ENCODE measurements at regions of chr17 and their contacts with region 1.

Region 1: GRCh38 chr17:9802305-9803096 is 11.1 kb upstream of the DHRS7C start:
- DNase-seq: peak; percentile 92 to 96
- H3K4me3 ChIP-seq: peak overlapping the region; percentile 46; the same call in 1 of the 2 replicates
- H3K27ac ChIP-seq: peak overlapping the region; percentile 97
- H3K4me1 ChIP-seq: peaks cover 24% of the 10 kb centered on the region
- H3K27me3 ChIP-seq: no peaks in the 10 kb centered on the region
- CTCF ChIP-seq: no peak

Region 2: DNA sequence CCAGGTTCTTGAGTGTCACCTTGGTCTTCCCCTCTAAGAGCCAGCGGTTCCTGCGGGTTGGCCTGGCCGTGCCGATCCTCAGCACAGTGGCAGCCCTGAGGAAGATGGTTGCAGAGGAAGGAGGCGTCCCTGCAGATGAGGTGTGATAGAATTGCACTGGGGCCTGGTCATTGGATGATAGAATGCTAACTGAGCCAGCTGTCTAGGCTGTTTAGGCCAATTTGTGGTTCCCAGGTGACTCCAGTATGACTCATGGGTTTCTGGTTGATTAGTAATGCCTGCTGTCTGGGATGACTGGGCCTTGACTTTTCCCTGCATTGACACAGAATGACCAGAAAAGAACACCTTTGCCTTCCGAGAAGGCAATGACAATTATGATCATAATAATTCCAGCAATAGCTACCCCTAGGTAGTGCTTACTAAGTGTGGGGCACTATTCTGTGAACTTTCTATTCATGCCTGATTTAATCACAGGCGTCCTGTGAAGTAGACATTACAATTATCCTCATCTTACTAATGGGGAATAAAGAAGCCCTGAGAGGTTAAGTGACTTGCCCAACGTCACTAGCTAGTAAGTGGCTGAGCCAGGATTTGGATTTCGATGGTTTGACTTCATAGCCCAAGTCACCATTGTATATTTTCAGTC is 125.6 kb before region 1 on chr17:
- CTCF ChIA-PET with region 1: no interaction called
- POLR2A ChIA-PET with region 1: no interaction called
- intact Hi-C with region 1: loop called (anchors 1 kb)
- DNase-seq: peak; percentile 83 to 91
- H3K4me3 ChIP-seq: no peak overlapping the region
- H3K27ac ChIP-seq: peak overlapping the region; percentile 83
- H3K4me1 ChIP-seq: peaks cover 25% of the 10 kb centered on the region
- H3K27me3 ChIP-seq: no peaks in the 10 kb centered on the region
- CTCF ChIP-seq: no peak

Region 3: DNA sequence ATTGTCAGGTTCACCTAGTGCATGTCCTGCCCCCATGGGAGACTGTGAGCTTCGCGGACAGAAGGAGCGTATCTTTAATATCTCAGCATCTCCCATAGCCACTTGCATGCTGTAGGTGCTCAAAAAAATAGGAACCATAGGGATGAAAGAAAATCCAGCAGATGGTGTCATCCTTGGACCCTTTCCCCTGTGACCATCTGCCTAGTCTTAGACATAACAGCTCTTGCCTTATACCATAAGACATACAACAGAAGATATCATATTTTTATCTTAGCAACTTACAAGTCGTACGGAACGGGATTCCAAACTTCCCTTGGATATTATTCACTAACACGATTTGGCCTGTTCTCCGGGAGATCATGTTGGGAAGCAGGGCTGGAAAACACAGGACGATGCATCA is 25.6 kb before region 1 on chr17:
- CTCF ChIA-PET with region 1: no interaction called
- POLR2A ChIA-PET with region 1: no interaction called
- intact Hi-C with region 1: no loop called
- DNase-seq: no peak
- H3K4me3 ChIP-seq: no peak overlapping the region
- H3K27ac ChIP-seq: no peak overlapping the region
- H3K4me1 ChIP-seq: no peaks in the 10 kb centered on the region
- H3K27me3 ChIP-seq: no peaks in the 10 kb centered on the region
- CTCF ChIP-seq: no peak

Region 4: GRCh38 chr17:9817086-9817485 is 14.6 kb after region 1 on chr17:
- CTCF ChIA-PET with region 1: interaction called, 5 read pairs
- POLR2A ChIA-PET with region 1: interaction called, 16 read pairs
- intact Hi-C with region 1: no loop called
- DNase-seq: peak in 1 of 2 experiments; percentile 83
- H3K4me3 ChIP-seq: no peak overlapping the region
- H3K27ac ChIP-seq: no peak overlapping the region
- H3K4me1 ChIP-seq: peaks cover 13% of the 10 kb centered on the region
- H3K27me3 ChIP-seq: no peaks in the 10 kb centered on the region
- CTCF ChIP-seq: no peak

Region 5: GRCh38 chr17:9828296-9829295 is 26.1 kb after region 1 on chr17:
- CTCF ChIA-PET with region 1: no interaction called
- POLR2A ChIA-PET with region 1: no interaction called
- intact Hi-C with region 1: no loop called
- DNase-seq: no peak
- H3K4me3 ChIP-seq: no peak overlapping the region
- H3K27ac ChIP-seq: no peak overlapping the region
- H3K4me1 ChIP-seq: no peaks in the 10 kb centered on the region
- H3K27me3 ChIP-seq: no peaks in the 10 kb centered on the region
- CTCF ChIP-seq: no peak

Region 6: GRCh38 chr17:9875441-9875840 is 72.9 kb after region 1 on chr17:
- CTCF ChIA-PET with region 1: interaction called, 7 read pairs
- POLR2A ChIA-PET with region 1: interaction called, 4 read pairs
- intact Hi-C with region 1: loop called (anchors 2 kb)
- DNase-seq: peak; percentile 66 to 87
- H3K4me3 ChIP-seq: no peak overlapping the region
- H3K27ac ChIP-seq: peak overlapping the region; percentile 90
- H3K4me1 ChIP-seq: peaks cover 48% of the 10 kb centered on the region
- H3K27me3 ChIP-seq: no peaks in the 10 kb centered on the region
- CTCF ChIP-seq: no peak

Region 7: DNA sequence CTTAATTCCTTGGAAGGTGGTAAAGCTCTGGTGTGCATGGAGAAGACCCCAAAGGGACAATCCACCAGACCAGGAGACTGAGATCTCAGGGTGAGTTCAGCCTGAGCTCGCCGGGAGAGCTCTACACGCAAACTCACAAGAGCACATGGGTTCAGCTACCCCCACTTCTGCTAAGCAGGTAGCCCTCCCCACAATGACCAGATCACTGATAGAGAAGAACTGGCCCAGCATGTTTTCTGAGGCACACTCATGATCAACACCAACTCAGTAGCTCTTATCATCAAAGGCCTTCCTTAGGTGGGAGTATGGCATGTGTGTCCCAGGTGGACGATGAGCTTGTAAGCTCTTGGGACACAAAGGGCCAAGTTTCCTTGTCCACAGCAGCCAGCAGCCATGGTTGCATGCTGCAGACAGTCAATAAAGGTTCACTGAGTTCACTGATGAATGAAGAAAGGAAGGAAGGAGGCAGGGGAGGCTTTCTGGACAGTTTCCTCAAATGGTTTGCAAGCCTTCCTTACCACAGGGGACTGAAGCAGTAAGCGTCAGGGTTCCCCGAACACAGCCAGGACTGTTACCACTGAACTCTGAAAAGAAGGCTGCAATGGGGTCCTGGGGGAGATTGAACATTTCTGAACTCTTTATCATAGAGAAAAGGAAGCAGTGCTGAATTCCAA is 284.7 kb after region 1 on chr17:
- CTCF ChIA-PET with region 1: no interaction called
- POLR2A ChIA-PET with region 1: no interaction called
- intact Hi-C with region 1: no loop called
- DNase-seq: no peak
- H3K4me3 ChIP-seq: no peak overlapping the region
- H3K27ac ChIP-seq: no peak overlapping the region
- H3K4me1 ChIP-seq: no peaks in the 10 kb centered on the region
- H3K27me3 ChIP-seq: peaks cover 58% of the 10 kb centered on the region
- CTCF ChIP-seq: no peak

Measured in PC-9 (cell line).